ENCODE measurements at regions of chr11 and their contacts with region 1.

Region 1: GRCh38 chr11:72352859-72353551 is 81.3 kb downstream of the CLPB start:
- DNase-seq: peak; percentile 63
- H3K4me3 ChIP-seq: no peak overlapping the region
- H3K27me3 ChIP-seq: no peaks in the 10 kb centered on the region
- CTCF ChIP-seq: peak; percentile 81

Region 2: GRCh38 chr11:71212871-71213559 is 1140.0 kb before region 1 on chr11:
- CTCF ChIA-PET with region 1: no interaction called
- POLR2A ChIA-PET with region 1: interaction called, 10 read pairs
- DNase-seq: no peak
- H3K4me3 ChIP-seq: no peak overlapping the region
- H3K27me3 ChIP-seq: no peaks in the 10 kb centered on the region; the same call in 1 of the 2 replicates
- CTCF ChIP-seq: no peak

Region 3: DNA sequence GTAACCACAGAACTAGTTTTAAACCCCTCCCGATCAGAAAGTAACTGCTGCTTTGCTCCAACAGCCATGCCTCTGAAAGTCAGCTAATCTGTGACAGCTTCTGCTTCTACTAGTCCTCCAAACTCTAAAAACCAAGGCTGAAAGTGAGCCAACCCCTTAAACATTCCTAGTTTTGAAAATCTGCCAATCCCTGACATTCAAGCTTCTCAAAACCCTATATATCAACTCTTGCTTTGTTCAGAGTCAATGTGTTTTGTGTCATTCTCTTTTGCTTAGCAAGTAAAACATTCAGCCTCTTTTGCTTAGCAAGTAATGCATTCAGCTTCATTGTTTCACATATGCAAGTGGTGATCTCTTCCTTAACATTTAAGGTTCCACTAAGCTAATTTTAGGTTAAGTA is 518.1 kb after region 1 on chr11:
- CTCF ChIA-PET with region 1: no interaction called
- POLR2A ChIA-PET with region 1: no interaction called
- DNase-seq: no peak
- H3K4me3 ChIP-seq: no peak overlapping the region
- H3K27me3 ChIP-seq: no peaks in the 10 kb centered on the region
- CTCF ChIP-seq: no peak